CD8-positive, alpha-beta T cell (primary cell): ENCODE measurements at regions of chr1 and their contacts with region 1.

Region 1: DNA sequence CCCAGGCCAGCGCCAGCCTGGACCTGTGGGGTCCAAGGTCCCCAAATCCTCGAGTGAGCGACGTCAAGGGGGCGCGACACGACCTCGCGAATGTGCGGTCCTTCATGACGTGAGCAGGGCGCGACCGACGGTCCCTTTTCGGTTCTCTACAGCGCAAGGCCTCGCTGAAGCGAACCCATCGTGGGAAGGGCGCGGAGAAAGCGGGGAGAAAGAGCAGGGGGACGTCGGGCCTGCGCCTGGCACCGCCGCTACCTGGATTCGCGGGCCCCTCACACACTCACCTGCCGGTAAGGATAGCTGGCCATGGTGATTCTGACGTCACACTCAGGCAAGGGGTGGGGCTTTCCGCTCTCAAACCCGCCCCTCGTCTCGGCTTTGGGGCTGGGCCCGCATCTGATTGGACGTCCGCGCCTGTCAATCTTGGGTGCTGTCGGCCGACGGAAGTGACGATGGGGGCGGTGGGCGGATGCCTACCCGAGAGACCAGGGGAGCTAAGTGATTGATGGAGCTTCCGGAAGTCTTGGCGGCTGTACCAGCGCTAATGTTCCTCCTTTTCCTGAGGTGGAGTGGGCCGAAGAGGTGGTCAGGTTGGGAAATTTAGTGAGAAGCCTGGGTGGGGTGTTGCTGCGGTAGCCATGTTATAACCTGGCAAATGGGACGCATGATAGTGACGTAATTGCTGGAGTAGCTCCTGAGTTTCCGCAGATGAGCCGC is at the start of gene PEF1:
- DNase-seq: peak; percentile 99 to 100 (median 99)
- ATAC-seq: peak; percentile 91
- H3K4me3 ChIP-seq: peak within 1 kb of the TSS; percentile 92 to 97
- H3K4me3 Mint-ChIP-seq: peak within 1 kb of the TSS; percentile 100
- H3K27ac ChIP-seq: peak within 1 kb of the TSS; percentile 99
- H3K27ac Mint-ChIP-seq: peak within 1 kb of the TSS; percentile 100
- H3K4me1 ChIP-seq: peaks cover 30% of the 10 kb centered on the region
- H3K4me1 Mint-ChIP-seq: peaks cover 40% of the 10 kb centered on the region
- H3K27me3 ChIP-seq: no peaks in the 10 kb centered on the region
- H3K27me3 Mint-ChIP-seq: no peaks in the 10 kb centered on the region
- CTCF ChIP-seq: no peak
- total RNA-seq, gene PEF1: 35.8 to 36.6 TPM

Region 2: DNA sequence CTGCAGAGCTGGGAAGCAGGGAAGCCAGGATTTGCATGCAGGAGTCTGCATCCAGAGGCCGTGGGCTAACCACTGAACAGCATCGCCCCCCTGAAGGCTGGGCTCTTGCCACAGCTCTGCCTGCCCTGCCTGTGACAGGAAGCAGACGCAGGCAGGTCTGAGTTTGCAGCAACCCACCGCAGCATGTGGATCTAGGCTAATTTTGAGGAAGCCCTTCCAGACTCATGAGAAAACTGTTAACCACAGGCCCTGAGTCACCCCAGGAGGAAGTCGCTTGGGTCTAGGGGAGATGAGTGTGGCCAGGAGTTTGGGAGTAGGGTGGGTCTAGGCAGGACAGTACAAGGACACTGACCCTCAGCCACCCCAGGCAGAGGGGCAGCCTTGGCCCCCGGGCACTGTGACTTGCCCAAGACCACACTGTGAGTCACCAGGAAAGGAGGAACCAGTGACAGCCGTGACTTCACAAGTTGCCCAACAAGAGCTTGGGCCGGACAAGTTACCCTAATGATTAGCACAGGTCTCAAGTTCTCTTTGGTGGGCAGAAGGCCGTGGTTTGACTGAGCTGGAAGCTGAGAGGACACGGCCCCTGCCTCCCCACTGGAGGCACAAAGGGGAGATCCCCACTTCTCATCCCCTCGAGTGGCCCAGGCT is 888.0 kb before region 1 on chr1:
- CTCF ChIA-PET with region 1: no interaction called
- POLR2A ChIA-PET with region 1: no interaction called
- intact Hi-C with region 1: loop called in 1 of 2 experiments (anchors 10 kb)
- DNase-seq: peak; percentile 52 to 92 (median 80)
- ATAC-seq: peak; percentile 59
- H3K4me3 ChIP-seq: peak overlapping the region; percentile 70 to 87
- H3K4me3 Mint-ChIP-seq: peak overlapping the region; percentile 97
- H3K27ac ChIP-seq: peak overlapping the region; percentile 78 to 92
- H3K27ac Mint-ChIP-seq: peak overlapping the region; percentile 99
- H3K4me1 ChIP-seq: peaks cover 72% of the 10 kb centered on the region
- H3K4me1 Mint-ChIP-seq: peaks cover 86% of the 10 kb centered on the region
- H3K27me3 ChIP-seq: no peaks in the 10 kb centered on the region
- H3K27me3 Mint-ChIP-seq: no peaks in the 10 kb centered on the region
- CTCF ChIP-seq: no peak

Region 3: GRCh38 chr1:31296486-31297276 is 348.0 kb before region 1 on chr1 and contains the starts of genes SNRNP40 and ZCCHC17:
- CTCF ChIA-PET with region 1: no interaction called
- POLR2A ChIA-PET with region 1: no interaction called
- intact Hi-C with region 1: loop called in 1 of 2 experiments (anchors 10 kb)
- DNase-seq: peak; percentile 85 to 99 (median 91)
- ATAC-seq: peak; percentile 90
- H3K4me3 ChIP-seq: peak within 1 kb of the TSS; percentile 67 to 83
- H3K4me3 Mint-ChIP-seq: no peak within 1 kb of the TSS
- H3K27ac ChIP-seq: peak within 1 kb of the TSS; percentile 90 to 92
- H3K27ac Mint-ChIP-seq: no peak within 1 kb of the TSS
- H3K4me1 ChIP-seq: peaks cover 31% of the 10 kb centered on the region
- H3K4me1 Mint-ChIP-seq: peaks cover 35% of the 10 kb centered on the region
- H3K27me3 ChIP-seq: no peaks in the 10 kb centered on the region
- H3K27me3 Mint-ChIP-seq: no peaks in the 10 kb centered on the region
- CTCF ChIP-seq: no peak
- total RNA-seq, gene SNRNP40: 78.3 to 81.9 TPM
- total RNA-seq, gene ZCCHC17: 7.2 to 8.0 TPM

Region 4: GRCh38 chr1:31938174-31938950 is 293.6 kb after region 1 on chr1 and contains the start of gene PTP4A2:
- CTCF ChIA-PET with region 1: no interaction called
- POLR2A ChIA-PET with region 1: no interaction called
- intact Hi-C with region 1: loop called in 1 of 2 experiments (anchors 10 kb)
- DNase-seq: peak; percentile 54 to 91 (median 79)
- ATAC-seq: peak; percentile 60
- H3K4me3 ChIP-seq: peak within 1 kb of the TSS; percentile 68 to 93
- H3K4me3 Mint-ChIP-seq: peak within 1 kb of the TSS; percentile 100
- H3K27ac ChIP-seq: peak within 1 kb of the TSS; percentile 57 to 85
- H3K27ac Mint-ChIP-seq: peak within 1 kb of the TSS; percentile 99
- H3K4me1 ChIP-seq: peaks cover 77% of the 10 kb centered on the region
- H3K4me1 Mint-ChIP-seq: peaks cover 70% of the 10 kb centered on the region
- H3K27me3 ChIP-seq: no peaks in the 10 kb centered on the region
- H3K27me3 Mint-ChIP-seq: no peaks in the 10 kb centered on the region
- CTCF ChIP-seq: peak; percentile 43
- total RNA-seq, gene PTP4A2: 257 to 278 TPM

Region 5: DNA sequence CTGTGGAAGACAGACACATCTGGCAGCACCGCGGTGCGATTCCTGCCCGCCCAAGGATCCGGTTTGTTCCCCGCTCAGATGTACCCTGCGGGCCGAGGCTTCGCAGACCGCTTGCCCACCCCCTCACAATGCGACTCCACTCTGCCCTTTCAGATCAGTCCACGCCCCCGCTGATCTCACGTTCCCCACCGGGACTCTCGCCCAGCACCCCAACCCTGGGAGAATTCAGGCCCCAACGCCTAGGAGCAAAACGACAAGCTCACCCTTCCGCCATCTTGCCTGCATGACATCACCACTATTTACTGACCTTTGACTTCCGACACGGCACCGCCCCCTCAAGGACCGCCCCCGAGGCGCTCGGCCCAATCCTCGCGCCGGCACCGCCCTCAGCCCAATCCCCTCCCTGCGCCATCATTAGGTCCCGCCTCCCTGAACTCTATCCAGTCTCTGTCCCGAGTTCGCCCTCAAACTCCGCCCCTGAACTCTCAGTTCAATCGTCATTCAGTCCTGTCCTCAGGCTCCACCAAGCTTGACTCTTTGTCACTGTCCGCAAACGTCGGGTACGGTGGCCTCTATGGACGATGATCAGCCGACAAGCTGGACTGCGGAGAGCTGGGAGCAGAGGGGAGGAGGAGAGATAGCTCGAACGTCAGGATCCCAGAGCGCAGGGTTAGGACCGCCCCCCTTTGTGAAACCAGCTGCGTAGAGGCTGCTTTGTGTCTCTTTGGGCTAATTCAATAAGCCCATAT is 749.6 kb after region 1 on chr1 and contains the start of gene BSDC1:
- CTCF ChIA-PET with region 1: no interaction called
- POLR2A ChIA-PET with region 1: interaction called, 5 read pairs
- intact Hi-C with region 1: loop called (anchors 1 to 10 kb)
- DNase-seq: peak; percentile 97 to 99 (median 98)
- ATAC-seq: peak; percentile 98
- H3K4me3 ChIP-seq: peak within 1 kb of the TSS; percentile 75 to 92
- H3K4me3 Mint-ChIP-seq: peak within 1 kb of the TSS; percentile 99
- H3K27ac ChIP-seq: peak within 1 kb of the TSS; percentile 86 to 98
- H3K27ac Mint-ChIP-seq: peak within 1 kb of the TSS; percentile 100
- H3K4me1 ChIP-seq: peaks cover 11% of the 10 kb centered on the region
- H3K4me1 Mint-ChIP-seq: peaks cover 31% of the 10 kb centered on the region
- H3K27me3 ChIP-seq: no peaks in the 10 kb centered on the region
- H3K27me3 Mint-ChIP-seq: no peaks in the 10 kb centered on the region
- CTCF ChIP-seq: no peak
- total RNA-seq, gene BSDC1: 189 to 201 TPM